Ovary (tissue), 10 donors: ENCODE measurements at regions of chr13 and their contacts with region 1.

Region 1: DNA sequence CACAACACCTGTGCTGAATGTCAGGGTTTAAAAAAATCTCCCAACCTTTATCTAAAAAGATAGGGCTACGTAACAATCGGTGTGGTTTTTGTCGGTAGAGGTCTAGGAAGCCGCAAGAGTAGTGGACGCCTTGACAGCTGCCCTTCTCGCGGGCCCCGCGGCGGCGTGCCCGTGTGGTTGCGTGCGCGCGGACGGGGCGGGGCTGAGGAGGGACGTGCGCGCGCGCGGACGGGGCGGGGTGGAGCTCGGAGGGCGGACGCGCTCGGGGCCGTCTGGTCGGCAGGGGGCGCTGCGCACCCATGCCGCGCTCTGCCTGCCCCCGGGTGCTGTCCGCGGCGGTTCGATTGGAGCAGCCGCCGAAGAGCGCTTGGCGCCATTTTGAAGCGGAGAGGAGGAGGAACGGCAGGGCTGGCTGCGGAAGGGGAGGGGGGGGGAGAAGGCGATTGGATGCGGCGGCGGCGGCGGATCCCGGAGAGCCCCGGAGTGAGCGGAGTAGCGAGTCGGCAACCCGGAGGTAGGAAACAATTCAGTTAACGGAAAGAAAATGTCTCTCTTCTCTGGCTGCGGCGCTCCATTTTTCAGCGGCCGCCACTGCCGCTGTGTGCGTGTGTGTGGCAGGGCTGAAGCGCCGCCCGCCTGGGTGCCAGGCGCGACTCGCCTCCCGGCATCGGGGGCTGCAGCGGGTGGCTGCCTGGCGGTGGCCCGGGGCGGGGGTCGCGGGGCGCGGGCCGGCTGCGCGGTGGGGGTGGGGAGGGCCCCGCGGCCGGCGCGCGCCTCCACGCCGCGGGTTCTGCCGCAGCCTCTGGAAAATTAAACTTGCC is at the start of gene PDS5B:
- DNase-seq: peak; percentile 92 to 97 (median 94)
- H3K4me3 ChIP-seq: peak within 1 kb of the TSS; percentile 78
- H3K27ac ChIP-seq: peak within 1 kb of the TSS; percentile 92 to 100
- H3K4me1 ChIP-seq: peaks cover 7% of the 10 kb centered on the region
- H3K27me3 ChIP-seq: no peaks in the 10 kb centered on the region
- CTCF ChIP-seq: peak; percentile 73 to 99 (median 98)
- EP300 ChIP-seq: no peak
- POLR2A ChIP-seq: peak; percentile 11
- total RNA-seq, gene PDS5B: 44.9 to 74.9 (median 55.6) TPM

Region 2: GRCh38 chr13:31587698-31588266 is 998.5 kb before region 1 on chr13:
- intact Hi-C with region 1: no loop called
- DNase-seq: no peak
- H3K4me3 ChIP-seq: no peak overlapping the region
- H3K27ac ChIP-seq: no peak overlapping the region
- H3K4me1 ChIP-seq: no peaks in the 10 kb centered on the region
- H3K27me3 ChIP-seq: no peaks in the 10 kb centered on the region
- CTCF ChIP-seq: no peak
- EP300 ChIP-seq: no peak
- POLR2A ChIP-seq: no peak

Region 3: DNA sequence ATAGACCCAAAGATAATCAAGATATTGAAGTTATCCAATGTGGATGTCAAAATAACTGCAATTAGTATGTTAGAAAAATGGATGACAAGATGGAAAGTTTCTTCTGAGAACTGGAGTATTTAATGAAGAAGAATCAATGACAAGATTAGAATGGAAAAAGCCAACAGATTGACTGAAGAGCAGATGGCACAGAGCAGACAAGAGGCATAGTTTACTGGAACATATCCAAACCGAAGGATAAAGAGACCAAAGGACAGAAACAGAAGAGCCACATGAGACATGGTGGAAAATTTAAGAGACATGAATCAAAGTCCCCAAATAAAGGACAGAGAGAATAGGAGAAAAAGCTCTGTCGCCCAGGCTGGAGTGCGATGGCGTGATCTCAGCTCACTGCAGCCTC is 936.5 kb before region 1 on chr13:
- intact Hi-C with region 1: no loop called
- DNase-seq: no peak
- H3K4me3 ChIP-seq: no peak overlapping the region
- H3K27ac ChIP-seq: no peak overlapping the region
- H3K4me1 ChIP-seq: no peaks in the 10 kb centered on the region
- H3K27me3 ChIP-seq: no peaks in the 10 kb centered on the region
- CTCF ChIP-seq: no peak
- EP300 ChIP-seq: no peak
- POLR2A ChIP-seq: no peak

Region 4: GRCh38 chr13:32639502-32640105 is 53.3 kb after region 1 on chr13:
- intact Hi-C with region 1: loop called in 2 of 4 experiments (anchors 5 kb)
- DNase-seq: peak; percentile 29 to 74 (median 55)
- H3K4me3 ChIP-seq: no peak overlapping the region
- H3K27ac ChIP-seq: no peak overlapping the region
- H3K4me1 ChIP-seq: peaks cover 4% of the 10 kb centered on the region
- H3K27me3 ChIP-seq: no peaks in the 10 kb centered on the region
- CTCF ChIP-seq: peak; percentile 16 to 75 (median 69)
- EP300 ChIP-seq: no peak
- POLR2A ChIP-seq: no peak

Region 5: DNA sequence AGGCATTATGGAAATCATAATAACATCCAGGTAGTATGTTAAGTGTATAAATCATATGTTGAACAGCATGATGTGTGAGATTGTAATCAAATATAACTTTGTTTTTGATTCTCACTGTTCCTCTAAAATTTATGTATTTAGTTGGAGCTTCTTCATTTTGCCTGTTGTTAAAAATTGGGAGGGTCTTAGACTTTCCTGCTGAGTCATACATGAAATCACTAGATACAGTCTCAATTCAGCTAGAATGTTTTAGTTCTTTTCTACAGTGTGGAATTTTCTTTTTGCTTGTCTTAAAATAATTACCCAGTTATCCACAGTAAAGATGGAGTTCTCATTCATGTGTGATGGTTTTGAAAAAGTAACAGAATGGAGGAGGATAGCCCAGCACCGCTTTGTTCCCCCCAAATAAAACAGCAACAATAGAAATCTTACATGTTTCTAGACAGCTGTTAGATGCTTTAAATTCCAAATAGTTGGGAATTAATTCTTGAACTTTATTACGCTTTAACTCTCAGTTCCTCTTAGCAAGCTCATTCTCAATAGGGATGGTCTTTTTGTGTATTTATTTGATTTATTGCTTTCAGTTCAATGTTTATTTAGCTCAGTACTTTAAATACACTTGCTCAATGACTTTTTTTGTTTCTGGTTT is 109.4 kb after region 1 on chr13:
- intact Hi-C with region 1: loop called in 1 of 4 experiments (anchors 5 kb)
- DNase-seq: no peak
- H3K4me3 ChIP-seq: no peak overlapping the region
- H3K27ac ChIP-seq: no peak overlapping the region
- H3K4me1 ChIP-seq: no peaks in the 10 kb centered on the region
- H3K27me3 ChIP-seq: no peaks in the 10 kb centered on the region
- CTCF ChIP-seq: no peak
- EP300 ChIP-seq: no peak
- POLR2A ChIP-seq: no peak

Region 6: DNA sequence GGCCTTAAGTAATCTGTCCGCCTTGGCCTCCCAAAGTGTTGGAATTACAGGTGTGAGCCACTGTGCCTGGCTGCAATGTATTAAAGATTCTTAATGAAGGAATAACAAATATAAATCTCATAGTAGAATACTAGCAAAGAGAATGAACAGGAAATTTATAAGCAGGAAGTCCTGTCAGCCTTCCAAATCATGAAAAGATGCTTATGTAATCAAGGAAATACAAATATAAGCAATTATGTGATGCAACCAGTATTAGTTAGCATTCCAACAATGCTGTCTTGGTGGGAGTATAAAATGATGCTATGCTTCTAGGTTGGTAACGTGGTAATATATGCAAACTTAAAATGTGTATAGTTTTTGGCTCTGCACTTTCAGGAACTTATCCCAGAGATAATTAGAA is 133.7 kb after region 1 on chr13:
- intact Hi-C with region 1: no loop called
- DNase-seq: no peak
- H3K4me3 ChIP-seq: no peak overlapping the region
- H3K27ac ChIP-seq: no peak overlapping the region
- H3K4me1 ChIP-seq: peaks cover 8% of the 10 kb centered on the region
- H3K27me3 ChIP-seq: no peaks in the 10 kb centered on the region
- CTCF ChIP-seq: no peak
- EP300 ChIP-seq: no peak
- POLR2A ChIP-seq: no peak

Region 7: DNA sequence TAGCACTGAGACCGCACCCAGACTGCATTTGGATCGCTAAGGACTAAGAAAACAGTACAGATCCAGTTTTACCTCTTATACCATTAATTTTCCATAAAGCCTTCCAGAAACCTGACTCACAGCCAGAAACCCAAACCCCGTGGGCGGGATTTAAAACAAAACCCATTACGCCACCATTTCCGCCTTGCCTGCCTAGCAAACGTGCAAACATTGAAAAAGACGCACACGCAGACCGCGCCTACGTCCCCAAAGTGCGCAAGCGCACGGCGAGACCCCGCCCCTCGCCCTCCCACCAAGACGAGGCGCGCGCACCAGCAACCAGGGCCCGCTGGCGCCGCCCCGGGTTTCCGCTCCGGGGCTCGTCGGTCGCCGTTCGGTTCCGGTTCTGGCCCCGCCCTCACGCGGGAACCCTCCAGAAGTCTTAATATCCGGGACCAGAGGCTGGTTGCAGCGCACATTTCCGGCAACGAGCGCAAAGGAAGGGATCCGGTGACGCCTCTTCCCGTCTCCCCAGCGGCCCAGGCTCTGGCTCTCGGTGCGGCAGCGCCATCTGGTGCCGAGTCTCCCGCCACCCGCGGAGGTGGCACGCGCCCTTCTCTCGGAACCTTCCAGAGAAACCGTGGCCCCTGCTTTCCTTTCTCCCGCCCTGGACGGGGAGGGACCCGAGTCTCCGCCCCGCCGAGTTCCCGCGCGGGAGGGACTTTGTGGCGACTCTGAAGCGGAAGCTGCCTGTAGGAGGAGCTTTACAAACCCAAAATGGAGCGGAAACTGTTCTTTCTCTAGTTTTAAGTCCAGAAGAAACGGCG is 956.2 kb after region 1 on chr13:
- intact Hi-C with region 1: loop called in 2 of 4 experiments (anchors 2 to 5 kb)
- DNase-seq: peak; percentile 97 to 100 (median 98)
- H3K4me3 ChIP-seq: peak overlapping the region; percentile 38
- H3K27ac ChIP-seq: peak overlapping the region; percentile 92 to 96
- H3K4me1 ChIP-seq: peaks cover 4% of the 10 kb centered on the region
- H3K27me3 ChIP-seq: no peaks in the 10 kb centered on the region
- CTCF ChIP-seq: peak; percentile 92 to 97 (median 97)
- EP300 ChIP-seq: peak; percentile 96
- POLR2A ChIP-seq: peak; percentile 62